ENCODE measurements at regions of chr2 and their contacts with region 1.

Region 1: DNA sequence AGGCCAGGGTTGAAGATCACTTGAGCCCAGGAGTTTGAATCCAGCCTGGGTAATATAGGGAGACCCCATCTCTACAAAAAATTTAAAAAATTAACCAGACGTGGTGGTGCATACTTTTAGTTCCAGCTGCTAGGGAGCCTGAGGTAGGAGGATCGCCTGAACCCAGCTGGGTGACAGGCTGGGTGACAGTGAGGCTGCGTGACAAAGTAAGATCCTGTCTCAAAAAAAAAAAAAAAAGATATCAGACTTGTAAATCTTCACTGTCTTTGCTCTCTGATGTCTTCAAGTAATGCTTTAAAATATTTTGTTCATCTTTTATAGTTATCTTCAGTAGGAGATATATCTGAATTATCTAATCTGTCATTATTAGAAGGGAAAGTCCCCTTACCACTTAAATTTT is 10.5 kb downstream of the CAMKMT start:
- DNase-seq: no peak
- ATAC-seq: no peak
- H3K4me3 ChIP-seq: no peak overlapping the region
- H3K27ac ChIP-seq: no peak overlapping the region
- H3K4me1 ChIP-seq: no peaks in the 10 kb centered on the region
- H3K27me3 ChIP-seq: no peaks in the 10 kb centered on the region
- CTCF ChIP-seq: no peak

Region 2: GRCh38 chr2:44635725-44636124 is 263.5 kb after region 1 on chr2:
- intact Hi-C with region 1: no loop called
- DNase-seq: no peak
- ATAC-seq: no peak
- H3K4me3 ChIP-seq: no peak overlapping the region
- H3K27ac ChIP-seq: no peak overlapping the region
- H3K4me1 ChIP-seq: peaks cover 0 to 23% (median 5%) of the 10 kb centered on the region in 9 donors
- H3K27me3 ChIP-seq: no peaks in the 10 kb centered on the region
- CTCF ChIP-seq: no peak

Region 3: DNA sequence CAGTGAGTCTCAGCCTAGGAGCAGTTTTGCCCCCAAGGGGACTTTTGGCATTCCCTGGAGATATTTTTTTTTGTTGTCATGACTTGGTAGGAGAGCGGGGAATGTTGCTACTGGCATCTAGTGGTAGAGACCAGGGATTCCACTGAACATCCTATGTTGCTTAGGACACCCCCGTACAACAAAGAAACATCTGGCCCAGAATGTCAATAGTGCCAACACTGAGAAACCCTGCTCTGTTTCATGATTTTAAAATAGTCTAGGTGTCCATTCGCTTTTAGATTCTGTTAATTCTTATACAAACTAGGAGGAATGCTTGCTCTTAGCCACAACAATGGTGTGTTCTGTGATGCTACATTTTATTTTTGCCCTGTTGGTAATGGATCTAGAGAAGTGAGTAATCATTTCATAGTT is 343.4 kb after region 1 on chr2:
- intact Hi-C with region 1: no loop called
- DNase-seq: peak in 1 of 2 donors; percentile 17
- ATAC-seq: peak in 5 of 8 donors; percentile 37 to 64 (median 39)
- H3K4me3 ChIP-seq: no peak overlapping the region
- H3K27ac ChIP-seq: no peak overlapping the region
- H3K4me1 ChIP-seq: peaks cover 0 to 11% (median 0%) of the 10 kb centered on the region in 9 donors
- H3K27me3 ChIP-seq: no peaks in the 10 kb centered on the region
- CTCF ChIP-seq: peak in 7 of 9 donors; percentile 42 to 67 (median 52)

Region 4: GRCh38 chr2:45554073-45554741 is 1182.0 kb after region 1 on chr2:
- intact Hi-C with region 1: no loop called
- DNase-seq: no peak
- ATAC-seq: no peak
- H3K4me3 ChIP-seq: no peak overlapping the region
- H3K27ac ChIP-seq: no peak overlapping the region
- H3K4me1 ChIP-seq: peaks cover 0 to 11% (median 0%) of the 10 kb centered on the region in 9 donors
- H3K27me3 ChIP-seq: no peaks in the 10 kb centered on the region
- CTCF ChIP-seq: no peak

Region 5: DNA sequence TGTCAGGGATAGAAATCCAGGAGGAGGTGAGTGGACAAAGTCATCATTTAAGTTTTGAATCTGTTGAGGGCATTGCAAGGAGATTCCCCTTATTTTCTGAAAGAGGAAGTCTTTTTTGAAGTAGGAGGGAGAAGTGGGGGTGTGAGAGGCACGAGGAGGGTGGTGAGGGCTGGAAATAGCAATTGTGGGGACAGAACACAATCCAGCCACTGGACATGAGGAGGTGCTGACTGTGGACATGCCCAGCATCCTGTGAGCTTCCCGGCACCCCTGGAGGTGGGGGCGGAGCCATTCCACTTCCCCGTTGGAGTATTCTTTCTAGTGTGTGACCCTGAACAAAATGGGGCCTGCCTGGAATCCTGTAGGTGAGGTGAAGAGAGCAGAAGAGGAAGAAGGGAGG is 1614.3 kb after region 1 on chr2:
- intact Hi-C with region 1: loop called in 1 of 10 experiments (anchors 10 kb)
- DNase-seq: peak in 1 of 2 donors; percentile 15
- ATAC-seq: peak in 6 of 8 donors; percentile 30 to 60 (median 37)
- H3K4me3 ChIP-seq: no peak overlapping the region
- H3K27ac ChIP-seq: peak overlapping the region in 1 of 10 donors; percentile 44
- H3K4me1 ChIP-seq: peaks cover 0 to 31% (median 0%) of the 10 kb centered on the region in 9 donors
- H3K27me3 ChIP-seq: no peaks in the 10 kb centered on the region
- CTCF ChIP-seq: no peak